ENCODE measurements at regions of chr4 and their contacts with region 1.

Region 1: GRCh38 chr4:73055241-73055897 is 14.1 kb downstream of the COX18 start:
- DNase-seq: no peak
- H3K4me3 ChIP-seq: no peak overlapping the region
- H3K27ac ChIP-seq: 0 out of 2 replicates have a peak overlapping the region, but pooled peaks have one; percentile 6
- H3K4me1 ChIP-seq: peaks cover 3 to 20% (median 6%) of the 10 kb centered on the region in 4 experiments; a peak in 4 of 7 replicates
- H3K27me3 ChIP-seq: no peaks in the 10 kb centered on the region
- CTCF ChIP-seq: no peak
- EP300 ChIP-seq: no peak
- POLR2A ChIP-seq: no peak
- RAD21 ChIP-seq: no peak

Region 2: GRCh38 chr4:73036123-73036522 is 19.2 kb before region 1 on chr4:
- CTCF ChIA-PET with region 1: interaction called, 11 read pairs
- POLR2A ChIA-PET with region 1: interaction called, 3 read pairs
- DNase-seq: no peak
- H3K4me3 ChIP-seq: no peak overlapping the region
- H3K27ac ChIP-seq: no peak overlapping the region
- H3K4me1 ChIP-seq: no peaks in the 10 kb centered on the region
- H3K27me3 ChIP-seq: peaks cover 0 to 1% (median 0%) of the 10 kb centered on the region in 4 experiments; a peak in 1 of 7 replicates
- CTCF ChIP-seq: no peak
- EP300 ChIP-seq: no peak
- POLR2A ChIP-seq: no peak
- RAD21 ChIP-seq: no peak

Region 3: GRCh38 chr4:73275318-73275654 is 219.9 kb after region 1 on chr4:
- CTCF ChIA-PET with region 1: no interaction called
- POLR2A ChIA-PET with region 1: no interaction called
- DNase-seq: no peak
- H3K4me3 ChIP-seq: no peak overlapping the region
- H3K27ac ChIP-seq: no peak overlapping the region
- H3K4me1 ChIP-seq: no peaks in the 10 kb centered on the region
- H3K27me3 ChIP-seq: no peaks in the 10 kb centered on the region
- CTCF ChIP-seq: no peak
- EP300 ChIP-seq: no peak
- POLR2A ChIP-seq: no peak
- RAD21 ChIP-seq: no peak